Lower leg skin (tissue), 4 donors: ENCODE measurements at regions of chr3 and their contacts with region 1.

Region 1: DNA sequence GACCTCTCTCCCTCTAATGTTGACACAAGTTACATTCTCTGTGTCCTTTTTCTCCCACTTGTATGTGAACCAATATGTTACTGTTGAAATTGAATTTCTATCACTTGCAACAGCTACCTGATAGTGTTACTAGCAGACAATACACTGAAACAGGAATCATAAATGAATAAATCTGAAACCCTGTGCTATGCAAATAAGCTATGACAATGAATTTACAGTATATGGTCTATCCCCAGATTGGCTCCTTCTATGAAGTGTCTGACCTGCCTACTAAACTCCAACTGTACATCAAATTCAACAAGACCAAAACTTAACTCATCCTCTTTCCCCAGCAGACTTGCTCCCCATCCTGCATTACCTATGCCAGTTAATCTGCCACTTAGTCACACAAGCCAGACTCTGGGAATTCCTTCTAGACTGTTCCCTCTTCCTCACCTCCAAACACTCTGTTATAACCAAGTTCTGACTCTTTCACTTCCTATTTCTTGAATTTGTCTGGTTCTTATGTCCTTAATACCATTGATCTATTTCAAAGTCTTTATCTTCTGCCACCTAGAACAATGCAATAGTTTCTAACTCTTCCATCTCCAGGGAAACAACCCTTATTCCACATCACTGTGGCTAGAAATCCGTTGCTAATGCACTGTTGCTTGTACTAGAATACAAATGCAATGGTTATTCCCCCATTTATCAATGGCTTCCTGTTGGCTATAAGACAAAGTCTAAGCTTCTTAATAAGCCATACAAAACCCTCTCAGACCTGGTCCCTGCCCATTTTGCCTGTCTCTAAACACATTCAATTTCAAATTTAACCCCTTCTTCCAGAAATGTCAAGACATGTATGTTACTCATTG is 13.4 kb upstream of the ZNF639 start:
- DNase-seq: no peak
- H3K4me3 ChIP-seq: no peak overlapping the region
- CTCF ChIP-seq: no peak
- POLR2A ChIP-seq: no peak

Region 2: GRCh38 chr3:179015551-179016020 is 293.9 kb before region 1 on chr3:
- intact Hi-C with region 1: loop called (anchors 10 kb)
- DNase-seq: peak in 1 of 2 donors; percentile 65
- H3K4me3 ChIP-seq: no peak overlapping the region
- CTCF ChIP-seq: peak in 1 of 3 donors; percentile 49
- POLR2A ChIP-seq: no peak

Region 3: DNA sequence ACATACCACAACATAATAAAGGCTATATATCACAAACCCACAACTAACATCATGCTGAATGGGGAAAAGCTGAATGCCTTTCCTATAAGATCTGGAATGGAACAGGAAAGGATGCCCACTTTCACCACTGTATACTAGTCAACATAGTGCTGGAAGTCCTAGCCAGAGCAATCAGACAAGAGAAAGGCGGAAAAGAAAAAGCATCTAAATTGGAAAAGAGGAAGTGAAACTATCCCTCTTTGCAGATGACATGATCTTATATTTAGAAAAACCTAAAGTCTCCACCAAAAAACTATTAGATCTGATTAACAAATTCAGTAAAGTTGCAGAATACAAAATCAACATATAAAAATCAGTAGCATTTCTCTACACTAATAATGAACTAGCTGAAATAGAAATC is 175.9 kb before region 1 on chr3:
- intact Hi-C with region 1: no loop called
- DNase-seq: no peak
- H3K4me3 ChIP-seq: no peak overlapping the region
- CTCF ChIP-seq: no peak
- POLR2A ChIP-seq: no peak

Region 4: GRCh38 chr3:179147873-179148615 is 161.4 kb before region 1 on chr3 and contains the start of gene PIK3CA:
- intact Hi-C with region 1: loop called (anchors 10 kb)
- DNase-seq: peak; percentile 97 to 98
- H3K4me3 ChIP-seq: peak within 1 kb of the TSS; percentile 99
- CTCF ChIP-seq: no peak
- POLR2A ChIP-seq: no peak
- total RNA-seq, gene PIK3CA: 18.4 to 22.4 (median 21.3) TPM